SK-N-SH (cell line): ENCODE measurements at regions of chr17 and their contacts with region 1.

Region 1: DNA sequence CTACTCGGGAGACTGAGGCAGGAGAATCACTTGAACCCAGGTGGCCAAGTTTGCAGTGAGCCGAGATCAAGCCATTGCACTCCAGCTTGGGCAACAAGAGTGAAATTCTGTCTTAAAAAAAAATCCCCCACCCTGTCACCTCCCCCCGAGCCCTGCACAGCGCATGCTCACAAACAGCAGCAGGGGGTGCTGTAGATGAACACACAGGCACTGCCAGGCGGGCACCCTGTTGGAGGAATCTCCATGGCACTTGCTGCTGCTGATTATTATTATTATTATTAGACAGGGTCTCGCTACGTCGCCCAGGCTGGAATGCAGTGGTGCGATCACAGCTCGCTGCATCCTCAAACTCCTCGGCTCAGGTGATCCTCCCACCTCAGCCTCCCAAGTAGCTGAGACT is 24.6 kb downstream of the FZD2 start:
- DNase-seq: peak; percentile 68
- H3K4me3 ChIP-seq: no peak overlapping the region
- H3K27ac ChIP-seq: no peak overlapping the region
- H3K4me1 ChIP-seq: peaks cover 0 to 3% of the 10 kb centered on the region in 2 experiments; a peak in 1 of 4 replicates
- H3K27me3 ChIP-seq: no peaks in the 10 kb centered on the region
- CTCF ChIP-seq: peak; percentile 54
- EP300 ChIP-seq: no peak
- RAD21 ChIP-seq: peak; percentile 68

Region 2: GRCh38 chr17:44115585-44116415 is 466.1 kb before region 1 on chr17:
- CTCF ChIA-PET with region 1: no interaction called
- POLR2A ChIA-PET with region 1: no interaction called
- DNase-seq: peak; percentile 83
- H3K4me3 ChIP-seq: no peak overlapping the region; a peak in 1 of 4 replicates
- H3K27ac ChIP-seq: no peak overlapping the region
- H3K4me1 ChIP-seq: peaks cover 7 to 25% of the 10 kb centered on the region in 2 experiments; a peak in 3 of 4 replicates
- H3K27me3 ChIP-seq: no peaks in the 10 kb centered on the region
- CTCF ChIP-seq: peak; percentile 90
- EP300 ChIP-seq: no peak
- RAD21 ChIP-seq: peak; percentile 74

Region 3: GRCh38 chr17:44595216-44595775 is 13.4 kb after region 1 on chr17:
- CTCF ChIA-PET with region 1: interaction called, 17 read pairs
- POLR2A ChIA-PET with region 1: no interaction called
- DNase-seq: no peak
- H3K4me3 ChIP-seq: no peak overlapping the region
- H3K27ac ChIP-seq: no peak overlapping the region
- H3K4me1 ChIP-seq: peaks cover 9 to 13% of the 10 kb centered on the region in 2 experiments; a peak in 2 of 4 replicates
- H3K27me3 ChIP-seq: no peaks in the 10 kb centered on the region
- CTCF ChIP-seq: no peak
- EP300 ChIP-seq: no peak
- RAD21 ChIP-seq: no peak